Gastrocnemius medialis (tissue), 4 donors: ENCODE measurements at regions of chr15 and their contacts with region 1.

Region 1: GRCh38 chr15:55526559-55527036 is 18.6 kb upstream of the DNAAF4 start:
- DNase-seq: peak in 1 of 2 donors; percentile 31
- ATAC-seq: peak; percentile 78 to 79
- H3K4me3 ChIP-seq: no peak overlapping the region
- H3K27ac ChIP-seq: no peak overlapping the region
- H3K4me1 ChIP-seq: peaks cover 0 to 9% of the 10 kb centered on the region in 2 donors
- H3K27me3 ChIP-seq: no peaks in the 10 kb centered on the region
- CTCF ChIP-seq: peak; percentile 50 to 67 (median 61)
- POLR2A ChIP-seq: no peak

Region 2: GRCh38 chr15:55475842-55476241 is 50.8 kb before region 1 on chr15:
- in situ Hi-C with region 1: no loop called
- intact Hi-C with region 1: no loop called
- DNase-seq: no peak
- ATAC-seq: no peak
- H3K4me3 ChIP-seq: no peak overlapping the region
- H3K27ac ChIP-seq: no peak overlapping the region
- H3K4me1 ChIP-seq: no peaks in the 10 kb centered on the region
- H3K27me3 ChIP-seq: no peaks in the 10 kb centered on the region
- CTCF ChIP-seq: no peak
- POLR2A ChIP-seq: no peak

Region 3: GRCh38 chr15:55588070-55588814 is 61.6 kb after region 1 on chr15 and contains the start of gene PYGO1:
- in situ Hi-C with region 1: no loop called
- intact Hi-C with region 1: loop called (anchors 5 kb)
- DNase-seq: peak; percentile 24 to 54
- ATAC-seq: peak; percentile 73 to 82
- H3K4me3 ChIP-seq: peak within 1 kb of the TSS; percentile 65 to 76 (median 70)
- H3K27ac ChIP-seq: peak within 1 kb of the TSS; percentile 88 to 93 (median 92)
- H3K4me1 ChIP-seq: peaks cover 3 to 23% of the 10 kb centered on the region in 2 donors
- H3K27me3 ChIP-seq: no peaks in the 10 kb centered on the region
- CTCF ChIP-seq: peak in 1 of 5 experiments; percentile 10
- POLR2A ChIP-seq: peak; percentile 41 to 78
- total RNA-seq, gene PYGO1: 26.7 to 39.1 (median 32.3) TPM

Region 4: GRCh38 chr15:55601374-55601773 is 74.8 kb after region 1 on chr15:
- in situ Hi-C with region 1: no loop called
- intact Hi-C with region 1: no loop called
- DNase-seq: no peak
- ATAC-seq: no peak
- H3K4me3 ChIP-seq: no peak overlapping the region
- H3K27ac ChIP-seq: no peak overlapping the region
- H3K4me1 ChIP-seq: no peaks in the 10 kb centered on the region
- H3K27me3 ChIP-seq: no peaks in the 10 kb centered on the region
- CTCF ChIP-seq: no peak
- POLR2A ChIP-seq: no peak

Region 5: GRCh38 chr15:55637086-55637485 is 110.5 kb after region 1 on chr15:
- in situ Hi-C with region 1: loop called (anchors 5 to 10 kb)
- intact Hi-C with region 1: loop called (anchors 1 kb)
- DNase-seq: no peak
- ATAC-seq: peak in 1 of 2 donors; percentile 13
- H3K4me3 ChIP-seq: no peak overlapping the region
- H3K27ac ChIP-seq: peak overlapping the region; percentile 88 to 97 (median 94)
- H3K4me1 ChIP-seq: peaks cover 22 to 24% of the 10 kb centered on the region in 2 donors
- H3K27me3 ChIP-seq: no peaks in the 10 kb centered on the region
- CTCF ChIP-seq: no peak
- POLR2A ChIP-seq: no peak

Region 6: DNA sequence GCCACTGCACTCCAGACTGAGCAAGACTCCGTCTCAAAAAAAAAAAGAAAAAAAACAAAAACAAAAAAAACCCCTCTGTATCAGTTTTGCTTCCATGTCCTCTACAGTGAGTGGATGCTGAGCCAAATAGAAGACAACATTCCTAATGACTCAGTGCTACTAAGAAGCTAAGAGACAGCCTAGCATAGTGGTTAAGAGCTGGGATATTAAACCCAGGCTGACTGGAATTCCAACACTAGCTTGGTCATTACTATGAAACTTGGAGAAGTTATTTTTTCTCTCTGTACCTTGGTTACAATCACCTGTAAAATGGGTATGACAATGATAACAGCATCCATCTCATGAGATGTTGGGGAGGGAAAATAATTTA is 122.4 kb after region 1 on chr15:
- in situ Hi-C with region 1: loop called in 3 of 4 experiments (anchors 5 to 10 kb)
- intact Hi-C with region 1: no loop called
- DNase-seq: no peak
- ATAC-seq: no peak
- H3K4me3 ChIP-seq: no peak overlapping the region
- H3K27ac ChIP-seq: no peak overlapping the region
- H3K4me1 ChIP-seq: no peaks in the 10 kb centered on the region
- H3K27me3 ChIP-seq: no peaks in the 10 kb centered on the region
- CTCF ChIP-seq: no peak
- POLR2A ChIP-seq: no peak

Region 7: GRCh38 chr15:55868707-55869106 is 342.1 kb after region 1 on chr15:
- in situ Hi-C with region 1: no loop called
- intact Hi-C with region 1: loop called (anchors 10 kb)
- DNase-seq: peak in 1 of 2 donors; percentile 53
- ATAC-seq: peak; percentile 95 to 96
- H3K4me3 ChIP-seq: no peak overlapping the region
- H3K27ac ChIP-seq: peak overlapping the region; percentile 76 to 87 (median 83)
- H3K4me1 ChIP-seq: peaks cover 51 to 59% of the 10 kb centered on the region in 2 donors
- H3K27me3 ChIP-seq: no peaks in the 10 kb centered on the region
- CTCF ChIP-seq: no peak
- POLR2A ChIP-seq: no peak

Region 8: GRCh38 chr15:56869573-56869972 is 1343.0 kb after region 1 on chr15:
- in situ Hi-C with region 1: no loop called
- intact Hi-C with region 1: loop called (anchors 10 kb)
- DNase-seq: peak in 1 of 2 donors; percentile 35
- ATAC-seq: peak; percentile 46 to 58
- H3K4me3 ChIP-seq: no peak overlapping the region
- H3K27ac ChIP-seq: no peak overlapping the region
- H3K4me1 ChIP-seq: peaks cover 0 to 8% of the 10 kb centered on the region in 2 donors
- H3K27me3 ChIP-seq: no peaks in the 10 kb centered on the region
- CTCF ChIP-seq: peak; percentile 58 to 79 (median 70)
- POLR2A ChIP-seq: no peak